ENCODE measurements at regions of chr10 and their contacts with region 1.

Region 1: GRCh38 chr10:80046629-80047441 is 31.6 kb upstream of the TMEM254 start:
- DNase-seq: peak; percentile 79
- ATAC-seq: peak; percentile 92
- H3K4me3 ChIP-seq: no peak overlapping the region
- H3K4me3 Mint-ChIP-seq: no peak overlapping the region
- H3K27ac ChIP-seq: no peak overlapping the region
- H3K27ac Mint-ChIP-seq: no peak overlapping the region
- H3K4me1 ChIP-seq: no peaks in the 10 kb centered on the region
- H3K4me1 Mint-ChIP-seq: peaks cover 4% of the 10 kb centered on the region
- H3K27me3 ChIP-seq: peaks cover 0 to 4% (median 0%) of the 10 kb centered on the region in 4 experiments
- H3K27me3 Mint-ChIP-seq: peaks cover 3% of the 10 kb centered on the region
- CTCF ChIP-seq: peak; percentile 93

Region 2: GRCh38 chr10:79910344-79910743 is 136.5 kb before region 1 on chr10:
- CTCF ChIA-PET with region 1: interaction called, 57 read pairs
- POLR2A ChIA-PET with region 1: no interaction called
- intact Hi-C with region 1: loop called (anchors 1 kb)
- DNase-seq: no peak
- ATAC-seq: no peak
- H3K4me3 ChIP-seq: no peak overlapping the region
- H3K4me3 Mint-ChIP-seq: no peak overlapping the region
- H3K27ac ChIP-seq: no peak overlapping the region
- H3K27ac Mint-ChIP-seq: no peak overlapping the region
- H3K4me1 ChIP-seq: peaks cover under 1 to 1% of the 10 kb centered on the region in 2 donors
- H3K4me1 Mint-ChIP-seq: peaks cover 4% of the 10 kb centered on the region
- H3K27me3 ChIP-seq: peaks cover 0 to 16% (median 3%) of the 10 kb centered on the region in 4 experiments
- H3K27me3 Mint-ChIP-seq: peaks cover 41% of the 10 kb centered on the region
- CTCF ChIP-seq: no peak

Region 3: GRCh38 chr10:80025281-80025680 is 21.6 kb before region 1 on chr10:
- CTCF ChIA-PET with region 1: interaction called, 16 read pairs
- POLR2A ChIA-PET with region 1: no interaction called
- intact Hi-C with region 1: no loop called
- DNase-seq: no peak
- ATAC-seq: no peak
- H3K4me3 ChIP-seq: no peak overlapping the region
- H3K4me3 Mint-ChIP-seq: no peak overlapping the region
- H3K27ac ChIP-seq: no peak overlapping the region
- H3K27ac Mint-ChIP-seq: no peak overlapping the region
- H3K4me1 ChIP-seq: no peaks in the 10 kb centered on the region
- H3K4me1 Mint-ChIP-seq: peaks cover 5% of the 10 kb centered on the region
- H3K27me3 ChIP-seq: no peaks in the 10 kb centered on the region
- H3K27me3 Mint-ChIP-seq: no peaks in the 10 kb centered on the region
- CTCF ChIP-seq: no peak

Region 4: GRCh38 chr10:80078448-80079311 is 31.8 kb after region 1 on chr10 and contains the start of gene TMEM254:
- CTCF ChIA-PET with region 1: interaction called, 15 read pairs
- POLR2A ChIA-PET with region 1: no interaction called
- intact Hi-C with region 1: no loop called
- DNase-seq: peak; percentile 92
- ATAC-seq: peak; percentile 86
- H3K4me3 ChIP-seq: peak within 1 kb of the TSS; percentile 74 to 98 (median 97)
- H3K4me3 Mint-ChIP-seq: peak within 1 kb of the TSS; percentile 97
- H3K27ac ChIP-seq: peak within 1 kb of the TSS; percentile 84 to 90
- H3K27ac Mint-ChIP-seq: peak within 1 kb of the TSS; percentile 92
- H3K4me1 ChIP-seq: peaks cover 11 to 15% of the 10 kb centered on the region in 2 donors
- H3K4me1 Mint-ChIP-seq: peaks cover 16% of the 10 kb centered on the region
- H3K27me3 ChIP-seq: no peaks in the 10 kb centered on the region
- H3K27me3 Mint-ChIP-seq: no peaks in the 10 kb centered on the region
- CTCF ChIP-seq: no peak
- total RNA-seq, gene TMEM254: 13.1 and 13.7 TPM in 2 replicates

Measured in B cell (primary cell).